CD4-positive, alpha-beta T cell (primary cell): ENCODE measurements at regions of chr6 and their contacts with region 1.

Region 1: DNA sequence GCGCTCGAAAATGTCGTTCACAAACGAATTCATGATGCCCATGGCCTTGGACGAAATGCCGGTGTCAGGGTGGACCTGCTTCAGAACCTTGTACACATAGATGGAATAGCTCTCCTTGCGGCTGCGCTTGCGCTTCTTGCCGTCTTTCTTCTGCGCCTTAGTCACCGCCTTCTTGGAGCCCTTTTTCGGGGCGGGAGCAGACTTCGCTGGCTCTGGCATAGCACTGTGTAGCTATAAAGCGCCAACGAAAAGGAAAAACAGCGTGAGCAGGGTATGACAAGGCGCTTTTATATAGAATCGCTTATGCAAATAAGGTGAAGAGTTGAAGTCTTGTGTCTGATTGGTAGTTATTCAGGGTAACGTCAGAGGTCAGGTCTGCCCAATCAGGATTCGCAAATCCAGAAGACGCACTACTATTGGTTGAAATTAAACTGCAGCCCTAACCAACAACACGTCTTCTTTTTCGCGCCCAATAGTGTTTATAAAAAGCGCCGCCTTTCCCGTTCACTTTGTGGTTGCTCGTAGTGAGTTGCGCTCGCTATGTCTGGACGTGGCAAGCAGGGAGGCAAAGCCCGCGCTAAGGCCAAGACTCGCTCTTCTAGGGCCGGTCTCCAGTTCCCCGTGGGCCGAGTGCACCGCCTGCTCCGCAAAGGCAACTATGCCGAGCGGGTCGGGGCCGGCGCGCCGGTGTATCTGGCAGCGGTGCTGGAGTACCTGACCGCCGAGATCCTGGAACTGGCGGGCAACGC is 114.8 kb upstream of the PRSS16 start:
- DNase-seq: peak; percentile 80 to 99 (median 88)
- ATAC-seq: peak; percentile 79
- H3K4me3 ChIP-seq: peak overlapping the region; percentile 75
- H3K4me3 Mint-ChIP-seq: no peak overlapping the region
- H3K27ac ChIP-seq: peak overlapping the region; percentile 79 to 81
- H3K27ac Mint-ChIP-seq: no peak overlapping the region
- H3K4me1 ChIP-seq: peaks cover 31% of the 10 kb centered on the region
- H3K4me1 Mint-ChIP-seq: peaks cover 12% of the 10 kb centered on the region
- H3K27me3 ChIP-seq: no peaks in the 10 kb centered on the region
- H3K27me3 Mint-ChIP-seq: no peaks in the 10 kb centered on the region
- CTCF ChIP-seq: no peak

Region 2: DNA sequence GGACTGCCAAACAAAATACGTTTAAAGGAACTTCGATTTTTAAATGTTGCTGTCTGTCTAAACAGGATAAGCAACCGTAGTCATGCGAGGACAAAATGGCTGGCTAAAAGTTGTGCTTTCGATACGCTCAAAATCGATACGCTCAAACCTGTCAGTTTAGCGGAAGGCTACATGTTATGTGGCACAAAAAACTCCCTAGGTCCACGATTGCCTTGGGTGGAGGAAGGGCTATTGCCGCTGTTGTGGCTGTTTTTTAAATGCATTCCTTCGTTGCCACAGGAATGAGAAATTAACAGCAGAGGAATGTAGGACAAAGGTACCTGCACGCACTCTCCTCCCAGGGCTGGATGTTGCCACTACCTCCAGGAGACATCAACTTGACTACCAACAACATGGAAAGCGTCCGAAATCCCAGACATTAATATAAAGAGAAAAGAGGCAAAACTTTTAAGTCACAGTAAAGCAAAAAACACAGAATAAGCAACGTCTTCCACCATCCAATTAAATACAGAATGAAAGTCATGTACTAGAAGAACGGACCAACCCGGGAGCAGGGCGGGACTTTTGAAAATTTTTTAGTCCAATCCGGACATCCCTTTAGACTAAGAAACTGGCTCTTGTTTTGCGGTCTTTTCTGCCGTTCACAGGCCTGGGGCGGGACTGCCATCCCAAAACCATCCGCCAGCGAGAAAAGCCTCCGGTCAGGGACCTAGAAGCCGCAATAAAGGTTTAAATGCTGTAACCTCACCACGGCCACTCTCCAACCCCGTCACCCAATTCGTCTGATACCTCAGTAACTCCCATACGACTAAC is 1077.6 kb before region 1 on chr6:
- CTCF ChIA-PET with region 1: no interaction called
- POLR2A ChIA-PET with region 1: interaction called, 15 read pairs
- intact Hi-C with region 1: no loop called
- DNase-seq: peak; percentile 68 to 97 (median 80)
- ATAC-seq: peak; percentile 71
- H3K4me3 ChIP-seq: peak overlapping the region; percentile 89
- H3K4me3 Mint-ChIP-seq: peak overlapping the region; percentile 97
- H3K27ac ChIP-seq: peak overlapping the region; percentile 81
- H3K27ac Mint-ChIP-seq: peak overlapping the region; percentile 96
- H3K4me1 ChIP-seq: peaks cover 29% of the 10 kb centered on the region
- H3K4me1 Mint-ChIP-seq: peaks cover 28% of the 10 kb centered on the region
- H3K27me3 ChIP-seq: no peaks in the 10 kb centered on the region
- H3K27me3 Mint-ChIP-seq: no peaks in the 10 kb centered on the region
- CTCF ChIP-seq: no peak

Region 3: GRCh38 chr6:26249957-26250697 is 882.6 kb before region 1 on chr6:
- CTCF ChIA-PET with region 1: no interaction called
- POLR2A ChIA-PET with region 1: interaction called, 11 read pairs
- intact Hi-C with region 1: no loop called
- DNase-seq: peak; percentile 64 to 93 (median 74)
- ATAC-seq: peak; percentile 78
- H3K4me3 ChIP-seq: peak overlapping the region; percentile 75
- H3K4me3 Mint-ChIP-seq: peak overlapping the region; percentile 97
- H3K27ac ChIP-seq: peak overlapping the region; percentile 72 to 80
- H3K27ac Mint-ChIP-seq: peak overlapping the region; percentile 88
- H3K4me1 ChIP-seq: peaks cover 29% of the 10 kb centered on the region
- H3K4me1 Mint-ChIP-seq: peaks cover 44% of the 10 kb centered on the region
- H3K27me3 ChIP-seq: no peaks in the 10 kb centered on the region
- H3K27me3 Mint-ChIP-seq: no peaks in the 10 kb centered on the region
- CTCF ChIP-seq: no peak

Region 4: DNA sequence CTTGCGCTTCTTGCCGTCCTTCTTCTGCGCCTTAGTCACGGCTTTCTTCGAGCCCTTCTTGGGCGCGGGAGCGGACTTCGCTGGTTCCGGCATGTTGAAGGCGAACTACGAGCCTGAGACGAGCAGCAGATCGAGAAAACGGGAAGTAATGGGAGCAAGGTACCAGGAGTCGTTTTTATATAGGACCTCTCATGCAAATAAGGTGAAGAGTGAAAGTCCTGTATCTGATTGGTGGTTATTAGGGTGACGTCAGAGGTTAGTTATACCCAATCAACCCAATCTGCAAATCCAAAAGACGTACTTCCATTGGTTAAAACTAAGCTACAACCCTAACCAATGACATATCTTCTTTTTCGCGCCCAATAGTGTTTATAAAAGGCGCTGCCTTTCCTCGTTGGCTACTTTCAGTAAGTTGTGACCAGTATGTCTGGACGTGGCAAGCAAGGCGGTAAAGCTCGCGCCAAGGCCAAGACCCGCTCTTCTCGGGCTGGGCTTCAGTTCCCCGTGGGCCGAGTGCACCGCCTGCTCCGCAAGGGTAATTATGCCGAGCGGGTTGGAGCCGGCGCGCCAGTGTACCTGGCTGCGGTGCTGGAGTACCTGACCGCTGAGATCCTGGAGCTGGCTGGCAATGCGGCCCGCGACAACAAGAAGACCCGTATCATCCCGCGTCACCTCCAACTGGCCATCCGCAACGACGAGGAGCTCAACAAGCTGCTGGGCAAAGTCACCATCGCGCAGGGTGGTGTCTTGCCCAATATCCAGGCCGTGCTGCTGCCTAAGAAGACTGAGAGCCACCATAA is 14.2 kb after region 1 on chr6:
- CTCF ChIA-PET with region 1: interaction called, 14 read pairs
- POLR2A ChIA-PET with region 1: interaction called, 534 read pairs
- intact Hi-C with region 1: loop called (anchors 1 kb)
- DNase-seq: peak; percentile 61 to 99 (median 72)
- ATAC-seq: peak; percentile 86
- H3K4me3 ChIP-seq: peak overlapping the region; percentile 69
- H3K4me3 Mint-ChIP-seq: no peak overlapping the region
- H3K27ac ChIP-seq: peak overlapping the region; percentile 84 to 97
- H3K27ac Mint-ChIP-seq: no peak overlapping the region
- H3K4me1 ChIP-seq: peaks cover 17% of the 10 kb centered on the region
- H3K4me1 Mint-ChIP-seq: peaks cover 11% of the 10 kb centered on the region
- H3K27me3 ChIP-seq: no peaks in the 10 kb centered on the region
- H3K27me3 Mint-ChIP-seq: no peaks in the 10 kb centered on the region
- CTCF ChIP-seq: no peak

Region 5: DNA sequence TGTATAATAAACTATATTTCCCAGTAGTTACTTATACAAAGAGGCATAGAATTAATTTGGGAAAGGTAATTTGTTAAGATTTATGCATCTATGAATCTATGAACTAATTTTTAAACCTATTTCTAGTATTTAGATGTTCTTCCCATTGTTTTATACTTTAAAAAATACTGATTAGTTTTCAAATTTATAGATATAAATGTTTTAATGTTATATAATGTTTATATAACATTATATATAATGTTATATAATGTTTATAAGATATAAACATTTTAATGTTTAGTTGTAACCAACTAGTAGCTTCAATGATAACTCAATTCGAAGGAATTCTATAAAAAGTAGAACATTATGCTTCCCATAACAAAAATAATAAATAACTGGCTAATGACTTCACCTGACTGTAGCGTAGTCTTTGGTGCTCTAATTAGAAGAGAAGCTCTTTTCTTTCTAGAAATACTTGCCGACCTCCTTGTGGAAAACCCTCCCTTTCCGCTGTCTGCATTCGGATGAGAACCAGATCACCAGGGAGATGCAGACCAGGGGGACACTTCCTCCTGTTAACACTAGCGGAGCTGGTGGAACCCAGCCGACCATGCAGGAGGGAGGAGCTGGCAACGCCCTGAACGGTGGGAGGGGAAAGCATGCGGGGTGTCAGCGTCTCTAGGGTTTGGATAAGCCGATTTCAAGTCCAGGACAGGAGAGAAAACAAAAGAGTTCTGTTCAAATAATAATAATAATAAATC is 621.1 kb after region 1 on chr6:
- CTCF ChIA-PET with region 1: interaction called, 5 read pairs
- POLR2A ChIA-PET with region 1: interaction called, 17 read pairs
- intact Hi-C with region 1: loop called in 1 of 2 experiments (anchors 1 kb)
- DNase-seq: peak; percentile 31 to 81 (median 54)
- ATAC-seq: peak; percentile 11
- H3K4me3 ChIP-seq: peak overlapping the region; percentile 71
- H3K4me3 Mint-ChIP-seq: peak overlapping the region; percentile 97
- H3K27ac ChIP-seq: no peak overlapping the region
- H3K27ac Mint-ChIP-seq: peak overlapping the region; percentile 98
- H3K4me1 ChIP-seq: peaks cover 22% of the 10 kb centered on the region
- H3K4me1 Mint-ChIP-seq: peaks cover 41% of the 10 kb centered on the region
- H3K27me3 ChIP-seq: no peaks in the 10 kb centered on the region
- H3K27me3 Mint-ChIP-seq: peaks cover 10% of the 10 kb centered on the region
- CTCF ChIP-seq: no peak

Region 6: GRCh38 chr6:27871924-27872638 is 739.4 kb after region 1 on chr6:
- CTCF ChIA-PET with region 1: no interaction called
- POLR2A ChIA-PET with region 1: interaction called, 49 read pairs
- intact Hi-C with region 1: loop called in 1 of 2 experiments (anchors 5 kb)
- DNase-seq: peak; percentile 71 to 97 (median 82)
- ATAC-seq: peak; percentile 75
- H3K4me3 ChIP-seq: peak overlapping the region; percentile 86
- H3K4me3 Mint-ChIP-seq: peak overlapping the region; percentile 93
- H3K27ac ChIP-seq: peak overlapping the region; percentile 89
- H3K27ac Mint-ChIP-seq: peak overlapping the region; percentile 93
- H3K4me1 ChIP-seq: peaks cover 39% of the 10 kb centered on the region
- H3K4me1 Mint-ChIP-seq: peaks cover 41% of the 10 kb centered on the region
- H3K27me3 ChIP-seq: no peaks in the 10 kb centered on the region
- H3K27me3 Mint-ChIP-seq: no peaks in the 10 kb centered on the region
- CTCF ChIP-seq: peak; percentile 43